ENCODE measurements at regions of chr10 and their contacts with region 1.

Region 1: DNA sequence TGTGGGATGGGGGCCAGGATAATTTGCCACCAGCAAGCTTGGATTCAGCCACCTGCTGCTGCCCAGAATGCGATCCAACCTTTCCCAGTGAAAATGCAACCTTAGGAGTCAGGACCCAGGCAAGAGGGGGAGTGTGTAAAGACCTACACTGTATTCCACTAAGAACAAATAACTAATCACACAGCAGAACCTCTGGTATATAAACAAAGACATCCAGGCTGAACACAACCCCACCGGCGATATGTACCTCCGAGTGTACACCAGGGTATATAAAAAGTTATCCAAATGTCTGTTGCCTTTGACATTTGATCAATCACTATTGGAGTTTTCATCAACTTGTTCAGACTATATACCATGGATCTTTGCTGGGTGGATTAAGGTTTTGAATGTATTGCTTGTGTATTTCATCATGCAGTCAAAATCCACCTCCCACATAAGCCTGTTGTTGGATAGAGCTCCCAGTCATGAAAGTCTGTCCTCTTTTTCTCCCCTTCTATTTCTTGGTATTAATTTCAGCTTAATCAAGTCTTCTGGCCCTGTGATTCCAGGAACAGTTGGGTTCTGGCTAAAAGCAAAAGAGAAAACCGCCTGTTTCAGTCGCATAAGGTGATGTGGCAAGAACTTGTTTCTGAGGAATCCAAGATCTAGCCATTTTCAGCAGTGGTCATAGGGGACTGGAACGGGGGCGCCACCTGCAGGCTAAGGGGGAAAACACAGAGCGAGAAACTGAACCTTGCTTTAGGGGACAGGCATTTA is 290.7 kb downstream of the CCDC3 start:
- DNase-seq: peak; percentile 43 to 90
- H3K4me3 ChIP-seq: no peak overlapping the region
- H3K27ac ChIP-seq: no peak overlapping the region
- H3K4me1 ChIP-seq: peaks cover 2 to 18% (median 6%) of the 10 kb centered on the region in 4 experiments; a peak in 4 of 7 replicates
- H3K27me3 ChIP-seq: no peaks in the 10 kb centered on the region
- CTCF ChIP-seq: peak; percentile 84 to 94 (median 87)
- EP300 ChIP-seq: no peak
- POLR2A ChIP-seq: no peak
- RAD21 ChIP-seq: peak; percentile 94 to 95

Region 2: GRCh38 chr10:12264204-12264940 is 446.4 kb before region 1 on chr10:
- CTCF ChIA-PET with region 1: interaction called, 62 read pairs
- POLR2A ChIA-PET with region 1: no interaction called
- DNase-seq: peak; percentile 81 to 90
- H3K4me3 ChIP-seq: peak overlapping the region in 3 of 4 experiments; percentile 14 to 38 (median 35); a peak in 4 of 8 replicates
- H3K27ac ChIP-seq: no peak overlapping the region
- H3K4me1 ChIP-seq: peaks cover 0 to 3% (median 0%) of the 10 kb centered on the region in 4 experiments; a peak in 1 of 7 replicates
- H3K27me3 ChIP-seq: no peaks in the 10 kb centered on the region
- CTCF ChIP-seq: peak; percentile 78 to 91 (median 81)
- EP300 ChIP-seq: peak in 1 of 2 experiments; percentile 23; a peak in 1 of 3 replicates
- POLR2A ChIP-seq: no peak
- RAD21 ChIP-seq: peak; percentile 96 to 97